ENCODE measurements at regions of chr2 and their contacts with region 1.

Region 1: GRCh38 chr2:10434886-10435819 is 13.0 kb downstream of the ODC1 start:
- DNase-seq: peak; percentile 99
- H3K4me3 ChIP-seq: no peak overlapping the region; a peak in 1 of 4 replicates
- H3K27ac ChIP-seq: no peak overlapping the region
- H3K4me1 ChIP-seq: peaks cover 0 to 4% of the 10 kb centered on the region in 2 experiments; a peak in 1 of 4 replicates
- H3K27me3 ChIP-seq: no peaks in the 10 kb centered on the region
- CTCF ChIP-seq: peak; percentile 98
- EP300 ChIP-seq: no peak
- RAD21 ChIP-seq: peak; percentile 100

Region 2: GRCh38 chr2:10043906-10044601 is 391.1 kb before region 1 on chr2:
- CTCF ChIA-PET with region 1: interaction called, 16 read pairs
- POLR2A ChIA-PET with region 1: no interaction called
- DNase-seq: peak; percentile 98
- H3K4me3 ChIP-seq: peak overlapping the region; percentile 59 to 68
- H3K27ac ChIP-seq: peak overlapping the region; percentile 58 to 77; a peak in 2 of 4 replicates
- H3K4me1 ChIP-seq: peaks cover 6 to 22% of the 10 kb centered on the region in 2 experiments; a peak in 1 of 4 replicates
- H3K27me3 ChIP-seq: no peaks in the 10 kb centered on the region
- CTCF ChIP-seq: no peak
- EP300 ChIP-seq: no peak
- RAD21 ChIP-seq: no peak

Region 3: GRCh38 chr2:10083692-10084181 is 351.4 kb before region 1 on chr2:
- CTCF ChIA-PET with region 1: interaction called, 373 read pairs
- POLR2A ChIA-PET with region 1: no interaction called
- DNase-seq: no peak
- H3K4me3 ChIP-seq: no peak overlapping the region
- H3K27ac ChIP-seq: no peak overlapping the region
- H3K4me1 ChIP-seq: no peaks in the 10 kb centered on the region; a peak in 1 of 4 replicates
- H3K27me3 ChIP-seq: peaks cover 31% of the 10 kb centered on the region
- CTCF ChIP-seq: no peak
- EP300 ChIP-seq: no peak
- RAD21 ChIP-seq: no peak

Region 4: DNA sequence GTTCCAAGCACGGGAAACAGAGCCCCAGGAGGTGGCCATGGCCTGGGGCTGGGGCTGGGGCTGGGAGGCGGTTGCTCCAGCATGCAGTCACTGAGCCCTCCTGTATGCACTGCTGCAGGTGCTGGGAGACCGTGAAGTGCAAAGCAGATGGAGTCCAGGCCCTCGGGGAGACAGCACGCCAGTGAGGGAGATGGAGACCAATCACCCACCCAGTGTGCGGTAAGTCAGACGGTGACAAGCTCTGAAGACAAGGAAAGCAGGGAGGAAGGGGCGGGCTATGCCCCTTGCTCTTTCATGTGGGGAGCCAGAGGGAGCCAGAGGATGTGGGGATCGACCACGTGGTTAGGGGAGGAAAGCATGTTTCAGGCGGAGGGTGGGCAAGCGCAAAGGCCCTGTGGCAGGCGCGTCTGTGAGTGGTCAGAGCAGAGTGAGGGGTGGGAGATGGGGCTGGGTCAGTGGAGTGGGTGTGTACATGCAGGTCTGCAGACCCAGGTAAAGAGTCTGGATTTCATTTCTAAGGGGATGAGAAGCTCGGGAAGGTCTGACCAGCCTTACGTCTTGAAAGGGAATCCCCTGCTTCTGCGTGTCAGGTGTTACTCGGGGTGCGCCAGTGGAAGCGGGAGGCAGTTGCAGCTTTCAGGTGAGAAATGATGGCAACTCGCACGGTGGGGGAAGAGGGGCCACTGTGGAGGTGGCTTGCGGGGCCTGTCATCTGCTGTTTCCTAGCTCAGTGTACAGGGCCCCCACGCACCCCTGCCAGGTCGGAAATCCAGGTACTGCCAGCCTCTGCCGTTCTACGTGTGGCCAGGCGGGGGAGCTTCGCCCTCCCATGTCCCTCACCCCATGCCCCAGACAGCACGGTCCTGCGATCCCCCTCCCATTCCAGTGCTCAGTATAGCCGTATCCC is 293.2 kb before region 1 on chr2:
- CTCF ChIA-PET with region 1: interaction called, 108 read pairs
- POLR2A ChIA-PET with region 1: interaction called, 13 read pairs
- DNase-seq: peak; percentile 88
- H3K4me3 ChIP-seq: no peak overlapping the region
- H3K27ac ChIP-seq: no peak overlapping the region
- H3K4me1 ChIP-seq: peaks cover 0 to 2% of the 10 kb centered on the region in 2 experiments; a peak in 1 of 4 replicates
- H3K27me3 ChIP-seq: no peaks in the 10 kb centered on the region
- CTCF ChIP-seq: peak; percentile 65
- EP300 ChIP-seq: no peak
- RAD21 ChIP-seq: peak; percentile 74

Region 5: DNA sequence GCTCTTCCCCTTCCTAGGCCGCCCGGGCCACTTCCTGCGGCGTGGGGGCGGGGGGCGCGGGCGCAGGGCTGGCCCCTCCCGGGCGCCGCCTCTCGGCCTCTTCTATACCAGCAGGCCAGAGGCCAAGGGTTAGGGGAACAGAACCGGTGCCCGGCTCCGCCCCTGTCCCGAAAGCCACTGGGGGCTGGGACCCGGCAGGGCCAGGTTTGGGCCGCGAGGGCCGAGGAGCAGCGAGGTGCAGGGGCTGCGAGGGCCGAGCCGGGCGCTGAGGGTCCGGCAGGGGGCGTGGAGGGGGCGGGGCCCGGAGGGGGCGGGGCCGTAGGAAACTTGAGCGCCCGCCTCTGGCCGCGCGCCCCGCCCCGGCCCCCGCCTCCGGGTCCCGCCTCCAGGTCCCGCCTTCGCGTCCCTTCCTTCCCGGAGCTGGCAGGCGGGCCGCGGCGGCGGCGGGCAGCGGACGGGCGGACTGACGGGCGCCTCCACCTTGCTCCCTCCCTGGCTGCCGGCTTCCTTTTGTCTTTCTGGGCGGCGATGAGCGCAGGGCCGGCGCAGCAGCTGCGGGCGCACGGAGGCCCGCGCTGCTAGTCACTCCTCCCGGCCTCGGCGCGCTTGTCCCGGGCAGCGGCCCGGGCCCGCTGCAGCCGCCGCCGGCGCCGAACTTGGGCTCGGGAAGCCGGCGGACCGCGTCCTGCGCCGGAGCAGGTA is 132.5 kb before region 1 on chr2 and contains the start of gene HPCAL1:
- CTCF ChIA-PET with region 1: interaction called, 40 read pairs
- POLR2A ChIA-PET with region 1: interaction called, 3 read pairs
- DNase-seq: peak; percentile 100
- H3K4me3 ChIP-seq: peak within 1 kb of the TSS; percentile 64 to 80
- H3K27ac ChIP-seq: peak within 1 kb of the TSS; percentile 15 to 85; a peak in 3 of 4 replicates
- H3K4me1 ChIP-seq: peaks cover 11 to 59% of the 10 kb centered on the region in 2 experiments
- H3K27me3 ChIP-seq: no peaks in the 10 kb centered on the region
- CTCF ChIP-seq: peak; percentile 63
- EP300 ChIP-seq: no peak
- RAD21 ChIP-seq: peak; percentile 34; the same call in 1 of the 2 replicates
- polyA plus RNA-seq, gene HPCAL1: 34.6 and 77.0 TPM in 2 replicates

Region 6: DNA sequence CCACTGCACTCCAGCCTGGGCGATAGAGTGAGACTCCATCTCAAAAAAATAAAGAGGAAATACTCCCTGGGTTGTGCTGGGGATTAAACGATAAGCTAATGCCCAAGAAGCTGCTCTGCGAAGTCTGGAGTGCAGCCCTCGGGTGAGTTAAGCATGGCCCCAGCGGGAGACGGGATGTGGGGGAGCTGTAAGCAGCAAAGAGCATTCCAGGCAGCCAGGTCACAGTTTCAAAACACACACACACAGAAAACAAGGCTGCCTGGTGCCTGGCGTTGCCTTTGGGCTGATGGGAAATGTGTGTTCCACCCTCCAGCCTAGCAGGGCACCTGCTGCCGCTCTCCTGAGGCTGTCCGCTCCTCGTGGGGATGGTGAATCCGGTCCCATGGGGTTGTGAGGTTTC is 11.1 kb before region 1 on chr2:
- CTCF ChIA-PET with region 1: interaction called, 69 read pairs
- POLR2A ChIA-PET with region 1: no interaction called
- DNase-seq: no peak
- H3K4me3 ChIP-seq: no peak overlapping the region
- H3K27ac ChIP-seq: no peak overlapping the region
- H3K4me1 ChIP-seq: peaks cover 0 to 3% of the 10 kb centered on the region in 2 experiments; a peak in 1 of 4 replicates
- H3K27me3 ChIP-seq: no peaks in the 10 kb centered on the region
- CTCF ChIP-seq: no peak
- EP300 ChIP-seq: no peak
- RAD21 ChIP-seq: no peak

Measured in SK-N-SH (cell line).